Transverse colon (tissue), 4 donors: ENCODE measurements at regions of chr4 and their contacts with region 1.

Region 1: GRCh38 chr4:175802988-175803387 is 9.1 kb downstream of the GPM6A start:
- DNase-seq: no peak
- H3K4me3 ChIP-seq: no peak overlapping the region
- H3K27ac ChIP-seq: no peak overlapping the region
- H3K4me1 ChIP-seq: no peaks in the 10 kb centered on the region
- H3K27me3 ChIP-seq: no peaks in the 10 kb centered on the region
- CTCF ChIP-seq: no peak
- EP300 ChIP-seq: no peak
- POLR2A ChIP-seq: no peak

Region 2: DNA sequence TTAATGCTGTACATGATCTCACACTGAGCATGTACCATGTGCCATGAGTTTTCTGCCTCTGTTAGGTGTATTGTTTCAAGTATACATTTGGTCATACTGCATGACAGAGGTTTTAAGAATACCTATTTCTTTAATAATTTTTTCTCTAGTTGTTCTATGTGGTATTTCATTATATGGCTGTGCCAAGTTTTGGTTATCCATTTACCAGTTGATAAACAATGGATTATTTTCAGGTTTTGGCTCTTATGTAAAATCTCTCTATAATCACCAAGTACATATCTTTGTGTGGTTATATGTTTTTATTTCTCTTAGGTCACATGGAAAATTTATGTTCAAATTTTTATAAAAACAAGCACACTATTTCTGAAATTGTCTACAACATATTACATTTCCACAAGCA is 212.8 kb before region 1 on chr4:
- in situ Hi-C with region 1: no loop called
- intact Hi-C with region 1: loop called (anchors 5 kb)
- DNase-seq: no peak
- H3K4me3 ChIP-seq: no peak overlapping the region
- H3K27ac ChIP-seq: no peak overlapping the region
- H3K4me1 ChIP-seq: no peaks in the 10 kb centered on the region
- H3K27me3 ChIP-seq: no peaks in the 10 kb centered on the region
- CTCF ChIP-seq: no peak
- EP300 ChIP-seq: no peak
- POLR2A ChIP-seq: no peak

Region 3: GRCh38 chr4:175657571-175657970 is 145.4 kb before region 1 on chr4:
- in situ Hi-C with region 1: no loop called
- intact Hi-C with region 1: no loop called
- DNase-seq: no peak
- H3K4me3 ChIP-seq: no peak overlapping the region
- H3K27ac ChIP-seq: no peak overlapping the region
- H3K4me1 ChIP-seq: no peaks in the 10 kb centered on the region
- H3K27me3 ChIP-seq: no peaks in the 10 kb centered on the region
- CTCF ChIP-seq: no peak
- EP300 ChIP-seq: no peak
- POLR2A ChIP-seq: no peak